Lower leg skin (tissue), 4 donors: ENCODE measurements at regions of chr3 and their contacts with region 1.

Region 1: GRCh38 chr3:47989981-47990440 is 26.2 kb downstream of the MAP4 start:
- DNase-seq: peak; percentile 84 to 92
- H3K4me3 ChIP-seq: no peak overlapping the region
- CTCF ChIP-seq: peak in 1 of 3 donors; percentile 46
- POLR2A ChIP-seq: no peak

Region 2: GRCh38 chr3:47612178-47612577 is 377.8 kb before region 1 on chr3:
- intact Hi-C with region 1: no loop called
- DNase-seq: no peak
- H3K4me3 ChIP-seq: no peak overlapping the region
- CTCF ChIP-seq: no peak
- POLR2A ChIP-seq: no peak

Region 3: DNA sequence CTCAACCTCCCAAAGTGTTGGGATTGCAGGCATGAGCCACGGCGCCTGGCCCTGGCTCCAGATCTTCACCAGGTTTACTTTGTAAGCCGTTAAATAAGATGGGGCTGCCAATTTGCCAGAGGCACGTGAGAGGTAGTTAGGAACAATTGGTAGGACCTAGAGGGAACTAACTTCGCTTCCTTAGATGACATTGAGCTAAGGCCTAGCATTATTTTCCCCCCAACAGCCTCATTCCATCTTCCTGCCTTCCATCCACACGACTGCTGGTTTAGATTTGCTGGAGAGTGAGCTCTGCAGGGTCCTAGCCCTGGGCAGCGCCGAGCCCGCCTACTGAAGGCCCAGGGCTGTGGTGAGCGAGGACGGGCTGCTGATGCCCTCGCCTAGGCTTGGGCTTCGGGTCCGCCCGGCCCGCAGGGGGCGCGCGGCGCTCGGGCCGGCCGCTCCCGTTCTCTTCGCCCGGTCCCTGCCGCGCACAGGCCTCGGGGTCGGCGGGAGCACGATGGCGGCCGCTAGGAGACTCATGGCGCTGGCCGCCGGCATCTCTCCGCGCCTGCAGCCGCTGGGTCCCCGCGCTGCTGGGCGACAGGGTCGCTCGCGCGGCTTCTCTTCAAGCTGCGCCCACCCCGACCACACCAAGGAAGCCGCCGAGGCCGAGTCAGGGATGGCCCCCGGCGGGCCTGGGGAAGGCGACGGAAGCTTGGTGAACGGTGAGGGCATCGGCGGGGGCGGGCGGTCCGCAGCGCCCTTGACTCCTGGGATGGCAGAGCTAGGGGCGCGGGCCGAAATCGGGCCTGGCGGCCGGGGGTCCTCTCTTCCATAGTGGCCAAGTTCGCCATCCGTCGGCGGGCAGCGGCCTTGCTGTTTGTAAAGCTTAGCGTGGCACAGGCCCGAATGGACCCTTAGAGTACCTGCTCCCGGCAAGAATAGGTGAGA is 165.2 kb before region 1 on chr3:
- intact Hi-C with region 1: loop called (anchors 5 kb)
- DNase-seq: peak; percentile 42 to 93
- H3K4me3 ChIP-seq: peak overlapping the region; percentile 95
- CTCF ChIP-seq: peak in 1 of 3 donors; percentile 8
- POLR2A ChIP-seq: no peak